Gastrocnemius medialis (tissue), 4 donors: ENCODE measurements at regions of chr14 and their contacts with region 1.

Region 1: GRCh38 chr14:30725763-30726162 is 103.6 kb downstream of the SCFD1 start:
- DNase-seq: no peak
- ATAC-seq: no peak
- H3K4me3 ChIP-seq: no peak overlapping the region
- H3K27ac ChIP-seq: no peak overlapping the region
- H3K4me1 ChIP-seq: no peaks in the 10 kb centered on the region
- H3K27me3 ChIP-seq: no peaks in the 10 kb centered on the region
- CTCF ChIP-seq: no peak
- POLR2A ChIP-seq: no peak

Region 2: GRCh38 chr14:30706704-30707103 is 19.1 kb before region 1 on chr14:
- in situ Hi-C with region 1: no loop called
- intact Hi-C with region 1: loop called (anchors 2 kb)
- DNase-seq: no peak
- ATAC-seq: no peak
- H3K4me3 ChIP-seq: no peak overlapping the region
- H3K27ac ChIP-seq: no peak overlapping the region
- H3K4me1 ChIP-seq: no peaks in the 10 kb centered on the region
- H3K27me3 ChIP-seq: no peaks in the 10 kb centered on the region
- CTCF ChIP-seq: no peak
- POLR2A ChIP-seq: no peak